Gastrocnemius medialis (tissue), 4 donors: ENCODE measurements at regions of chr16 and their contacts with region 1.

Region 1: GRCh38 chr16:9761870-9762269 is 420.4 kb downstream of the GRIN2A start:
- DNase-seq: no peak
- ATAC-seq: no peak
- H3K4me3 ChIP-seq: no peak overlapping the region
- H3K27ac ChIP-seq: no peak overlapping the region
- H3K4me1 ChIP-seq: no peaks in the 10 kb centered on the region
- H3K27me3 ChIP-seq: no peaks in the 10 kb centered on the region
- CTCF ChIP-seq: no peak
- POLR2A ChIP-seq: no peak

Region 2: DNA sequence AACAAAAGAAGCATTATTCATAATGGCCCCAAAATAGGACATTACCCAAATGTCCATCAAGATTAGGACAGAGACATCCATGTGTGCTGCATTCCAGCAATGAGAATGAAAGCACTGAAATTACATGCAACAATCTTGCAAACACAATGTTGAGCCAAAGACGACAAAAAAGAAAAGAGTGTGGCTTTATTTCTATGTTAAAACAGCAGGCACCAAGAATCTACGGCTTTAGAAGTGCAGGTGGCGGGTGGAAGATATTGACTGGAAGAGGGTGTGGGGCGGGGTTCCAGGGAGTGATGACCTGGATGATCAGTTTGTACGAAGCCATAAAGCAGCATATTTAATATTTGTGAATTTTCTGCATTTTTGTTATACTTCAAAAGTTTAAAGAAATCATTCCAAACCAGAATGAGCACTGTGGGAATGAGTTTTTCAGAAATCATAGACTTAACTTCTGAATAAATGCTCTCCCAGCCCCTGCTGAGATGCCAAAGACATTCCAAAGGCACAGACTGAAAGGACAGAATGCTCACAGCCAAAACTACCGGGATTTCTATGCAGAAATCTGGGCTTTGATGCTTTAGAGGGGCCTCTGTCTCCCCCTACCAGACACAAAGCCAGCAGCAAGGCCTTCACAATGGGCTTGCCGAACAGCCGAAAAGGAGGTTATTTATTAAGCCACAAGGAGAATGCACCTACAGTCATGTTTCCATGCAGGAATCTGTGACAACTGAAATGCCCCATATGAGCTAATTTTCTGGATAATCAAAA is 58.8 kb after region 1 on chr16:
- in situ Hi-C with region 1: loop called in 1 of 4 experiments (anchors 10 kb)
- intact Hi-C with region 1: no loop called
- DNase-seq: no peak
- ATAC-seq: no peak
- H3K4me3 ChIP-seq: no peak overlapping the region
- H3K27ac ChIP-seq: no peak overlapping the region
- H3K4me1 ChIP-seq: no peaks in the 10 kb centered on the region
- H3K27me3 ChIP-seq: peaks cover 0 to 4% (median 0%) of the 10 kb centered on the region in 3 donors
- CTCF ChIP-seq: no peak
- POLR2A ChIP-seq: no peak